K562 (cell line): ENCODE measurements at regions of chr19 and their contacts with region 1.

Region 1: GRCh38 chr19:13797870-13798269 is 2.6 kb downstream of the ZSWIM4 start:
- DNase-seq: no peak
- ATAC-seq: no peak
- H3K4me3 ChIP-seq: no peak overlapping the region
- H3K27ac ChIP-seq: 0 out of 3 replicates have a peak overlapping the region, but pooled peaks have one; percentile 23
- H3K4me1 ChIP-seq: peaks cover 11 to 37% of the 10 kb centered on the region in 2 experiments; a peak in 4 of 5 replicates
- H3K27me3 ChIP-seq: no peaks in the 10 kb centered on the region
- CTCF ChIP-seq: no peak
- EP300 ChIP-seq: no peak
- POLR2A ChIP-seq: no peak
- RAD21 ChIP-seq: no peak

Region 2: DNA sequence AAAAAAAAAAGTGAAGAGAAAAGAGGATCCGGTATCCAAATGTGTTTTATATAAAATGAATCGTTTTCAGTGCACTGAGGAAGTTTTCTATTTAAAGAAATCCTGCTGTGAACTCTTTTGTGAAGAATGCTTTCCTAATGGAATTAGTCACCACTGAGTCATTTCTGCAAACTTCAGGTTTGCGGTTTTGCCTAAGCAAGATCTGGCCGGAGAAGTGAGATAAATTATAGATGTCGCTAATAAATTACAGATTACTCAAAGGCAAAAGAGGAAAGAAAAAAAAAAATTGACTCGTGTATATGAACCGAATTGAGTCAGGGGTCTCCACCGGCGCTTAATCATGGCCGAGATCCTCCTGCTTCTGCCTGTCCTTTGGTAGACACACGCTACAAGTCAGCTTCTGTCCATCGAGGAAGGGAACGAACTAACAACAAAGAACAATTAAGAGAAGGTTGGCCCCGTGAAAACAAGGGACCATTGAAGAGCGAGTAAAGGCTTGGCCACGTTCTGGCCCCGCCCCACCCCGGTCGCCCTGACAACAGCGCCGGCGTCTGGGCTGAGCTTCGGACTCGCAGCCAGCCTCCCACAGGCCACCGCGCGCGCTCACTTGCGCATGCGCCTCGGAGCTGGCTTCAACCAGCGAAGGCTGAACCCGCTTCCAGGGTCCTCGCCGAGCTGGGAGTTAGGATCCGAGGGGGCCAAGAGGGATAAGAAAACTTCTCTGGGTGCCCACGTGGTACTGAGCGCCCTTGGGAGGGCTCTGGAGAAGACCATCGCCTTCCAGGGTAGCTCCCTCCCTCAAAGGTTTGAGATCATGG is 66.5 kb before region 1 on chr19:
- CTCF ChIA-PET with region 1: no interaction called
- POLR2A ChIA-PET with region 1: no interaction called
- in situ Hi-C with region 1: no loop called
- intact Hi-C with region 1: no loop called
- DNase-seq: peak; percentile 97 to 98 (median 98)
- ATAC-seq: peak; percentile 100
- H3K4me3 ChIP-seq: peak overlapping the region; percentile 61
- H3K27ac ChIP-seq: peak overlapping the region; percentile 83
- H3K4me1 ChIP-seq: peaks cover 11 to 13% of the 10 kb centered on the region in 2 experiments
- H3K27me3 ChIP-seq: no peaks in the 10 kb centered on the region
- CTCF ChIP-seq: no peak
- EP300 ChIP-seq: no peak; the same call in 1 of the 2 replicates
- POLR2A ChIP-seq: peak; percentile 89
- RAD21 ChIP-seq: no peak; a peak in 1 of 4 replicates

Region 3: GRCh38 chr19:13784731-13785452 is 13.0 kb before region 1 on chr19:
- CTCF ChIA-PET with region 1: no interaction called
- POLR2A ChIA-PET with region 1: interaction called, 11 read pairs
- in situ Hi-C with region 1: no loop called
- intact Hi-C with region 1: no loop called
- DNase-seq: peak; percentile 43 to 70 (median 61)
- ATAC-seq: peak; percentile 90
- H3K4me3 ChIP-seq: no peak overlapping the region
- H3K27ac ChIP-seq: no peak overlapping the region
- H3K4me1 ChIP-seq: peaks cover 7 to 21% of the 10 kb centered on the region in 2 experiments; a peak in 4 of 5 replicates
- H3K27me3 ChIP-seq: no peaks in the 10 kb centered on the region
- CTCF ChIP-seq: peak; percentile 53 to 81 (median 77)
- EP300 ChIP-seq: no peak
- POLR2A ChIP-seq: no peak
- RAD21 ChIP-seq: peak; percentile 79 to 80

Region 4: DNA sequence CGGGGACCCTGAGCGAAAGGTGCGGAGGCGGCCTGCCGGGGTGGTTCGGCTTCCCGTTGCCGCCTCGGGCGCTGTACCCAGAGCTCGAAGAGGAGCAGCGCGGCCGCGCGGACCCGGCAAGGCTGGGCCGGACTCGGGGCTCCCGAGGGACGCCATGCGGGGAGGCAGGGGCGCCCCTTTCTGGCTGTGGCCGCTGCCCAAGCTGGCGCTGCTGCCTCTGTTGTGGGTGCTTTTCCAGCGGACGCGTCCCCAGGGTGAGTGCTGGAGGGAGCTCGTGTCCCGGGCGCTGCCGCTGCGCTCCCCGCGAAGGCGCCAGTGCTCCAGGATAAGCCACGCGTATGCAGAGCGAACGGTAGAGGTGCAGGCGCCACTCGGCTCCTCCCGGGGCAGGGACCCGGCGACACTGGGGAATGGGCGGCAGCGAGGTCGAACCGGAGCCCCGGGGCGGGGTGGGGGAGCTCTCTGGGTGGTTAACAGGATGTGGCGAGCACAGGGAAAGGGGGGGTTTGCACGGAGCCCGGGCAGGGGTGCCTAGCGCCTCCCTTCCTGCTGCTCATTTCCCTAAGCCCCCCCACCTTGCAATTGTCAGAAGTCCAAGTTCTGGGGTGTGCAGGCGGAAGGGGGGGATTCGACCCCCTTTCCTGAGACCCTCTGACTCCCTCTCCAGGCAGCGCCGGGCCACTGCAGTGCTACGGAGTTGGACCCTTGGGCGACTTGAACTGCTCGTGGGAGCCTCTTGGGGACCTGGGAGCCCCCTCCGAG is 234.0 kb after region 1 on chr19 and contains the start of gene IL27RA:
- CTCF ChIA-PET with region 1: no interaction called
- POLR2A ChIA-PET with region 1: no interaction called
- in situ Hi-C with region 1: no loop called
- intact Hi-C with region 1: no loop called
- DNase-seq: peak; percentile 79 to 88 (median 82)
- ATAC-seq: peak; percentile 83
- H3K4me3 ChIP-seq: peak within 1 kb of the TSS; percentile 56
- H3K27ac ChIP-seq: peak within 1 kb of the TSS; percentile 81
- H3K4me1 ChIP-seq: peaks cover 20 to 47% of the 10 kb centered on the region in 2 experiments; a peak in 4 of 5 replicates
- H3K27me3 ChIP-seq: no peaks in the 10 kb centered on the region
- CTCF ChIP-seq: peak; percentile 80 to 91 (median 84)
- EP300 ChIP-seq: no peak
- POLR2A ChIP-seq: peak; percentile 78
- RAD21 ChIP-seq: peak; percentile 74 to 76
- polyA plus RNA-seq, gene IL27RA: 1.9 to 2.1 TPM